Posterior vena cava (tissue), 2 donors: ENCODE measurements at regions of chr16 and their contacts with region 1.

Region 1: DNA sequence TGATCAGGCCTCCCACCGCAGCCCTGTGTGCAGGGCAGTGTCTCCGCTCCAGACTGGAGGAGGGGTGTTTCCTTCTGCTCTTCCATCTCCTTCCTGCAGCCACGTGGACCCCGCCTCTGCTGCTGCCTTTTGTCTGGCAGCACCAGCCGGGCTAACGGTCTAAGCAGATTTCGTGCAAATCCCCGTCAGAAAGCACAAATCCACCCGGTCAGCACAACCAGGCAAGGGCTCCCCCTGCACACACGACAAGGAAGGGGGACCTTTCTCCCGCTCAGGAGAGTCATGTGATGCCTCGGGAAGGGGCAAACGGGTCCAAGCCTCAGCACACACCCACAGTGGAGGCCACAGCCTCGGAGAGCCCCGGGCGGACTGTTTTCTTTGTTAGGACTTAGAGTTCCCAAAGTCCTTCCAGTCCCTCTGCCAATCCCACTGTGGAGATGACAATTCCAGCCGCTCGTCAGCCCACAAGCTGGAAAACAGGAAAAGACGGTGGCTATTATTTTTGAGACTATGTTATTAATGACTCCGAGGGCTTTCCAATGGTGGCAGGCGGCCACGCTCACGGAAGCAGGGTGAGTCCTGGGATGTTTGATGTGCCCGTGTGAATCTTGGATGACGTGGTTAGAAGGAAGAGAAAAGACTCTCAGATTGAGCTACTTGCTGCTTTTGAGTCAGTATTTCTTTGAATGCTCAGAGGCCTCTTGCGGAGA is 22.5 kb upstream of the MEAK7 start:
- DNase-seq: no peak

Region 2: DNA sequence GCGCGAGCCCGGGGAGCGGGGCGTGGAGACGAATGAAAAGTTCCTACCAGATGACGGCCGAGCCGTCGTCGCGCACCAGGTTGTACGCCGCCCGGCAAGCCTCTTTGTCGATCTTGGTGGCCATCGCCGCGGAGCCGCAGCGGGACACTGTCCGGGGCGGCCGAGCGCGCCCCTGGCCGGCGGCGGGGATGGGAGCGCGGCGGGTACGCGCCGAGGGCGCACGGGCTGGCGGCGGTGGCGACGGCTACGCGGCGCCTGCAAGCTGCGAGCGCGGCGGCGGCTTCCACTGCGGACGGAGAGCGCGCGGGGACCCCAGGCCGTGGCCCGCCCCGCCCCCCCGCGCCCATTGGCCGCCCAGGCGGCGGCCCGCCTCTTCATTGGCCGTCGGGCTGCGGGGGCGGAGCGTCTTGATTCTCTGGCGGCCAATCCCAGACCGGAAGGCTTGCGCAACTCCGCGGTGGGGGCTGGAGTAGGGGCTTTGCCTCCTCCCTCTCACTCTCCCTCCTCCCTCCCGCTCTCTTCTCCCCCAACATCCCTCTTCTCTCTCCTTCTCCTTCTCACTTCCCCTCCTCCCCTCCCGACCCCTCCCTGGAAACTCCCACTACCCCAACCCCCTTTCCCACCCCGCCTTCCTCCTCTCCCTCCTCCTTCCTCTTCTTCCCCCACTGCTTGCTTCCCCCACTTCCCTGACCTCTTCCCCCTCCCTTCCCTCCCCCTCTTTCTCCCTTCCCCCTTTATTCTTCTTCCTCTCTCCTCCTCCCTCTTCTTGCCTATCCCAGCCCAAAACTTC is 91.0 kb after region 1 on chr16 and contains the start of gene COTL1:
- intact Hi-C with region 1: loop called in 1 of 2 experiments (anchors 5 kb)
- DNase-seq: peak; percentile 99
- total RNA-seq, gene COTL1: 55.0 to 66.0 TPM